ENCODE measurements at regions of chr11 and their contacts with region 1.

Region 1: DNA sequence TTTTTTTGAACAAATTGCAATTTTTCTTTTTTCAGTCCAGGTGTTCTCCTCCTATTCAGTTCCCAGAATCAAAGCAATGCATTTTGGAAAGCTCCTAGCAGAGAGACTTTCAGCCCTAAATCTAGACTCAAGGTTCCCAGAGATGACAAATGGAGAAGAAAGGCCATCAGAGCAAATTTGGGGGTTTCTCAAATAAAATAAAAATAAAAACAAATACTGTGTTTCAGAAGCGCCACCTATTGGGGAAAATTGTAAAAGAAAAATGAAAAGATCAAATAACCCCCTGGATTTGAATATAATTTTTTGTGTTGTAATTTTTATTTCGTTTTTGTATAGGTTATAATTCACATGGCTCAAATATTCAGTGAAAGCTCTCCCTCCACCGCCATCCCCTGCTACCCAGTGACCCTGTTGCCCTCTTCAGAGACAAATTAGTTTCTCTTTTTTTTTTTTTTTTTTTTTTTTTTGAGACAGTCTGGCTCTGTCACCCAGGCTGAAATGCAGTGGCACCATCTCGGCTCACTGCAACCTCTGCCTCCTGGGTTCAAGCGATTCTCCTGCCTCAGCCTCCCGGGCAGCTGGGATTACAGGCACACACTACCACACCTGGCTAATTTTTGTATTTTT is 6.2 kb upstream of the UBE4A start:
- DNase-seq: peak; percentile 64
- ATAC-seq: no peak
- H3K4me3 ChIP-seq: no peak overlapping the region
- H3K4me3 Mint-ChIP-seq: no peak overlapping the region
- H3K27ac ChIP-seq: no peak overlapping the region
- H3K27ac Mint-ChIP-seq: no peak overlapping the region
- H3K4me1 ChIP-seq: no peaks in the 10 kb centered on the region
- H3K4me1 Mint-ChIP-seq: no peaks in the 10 kb centered on the region
- H3K27me3 ChIP-seq: peaks cover 0 to 3% (median 0%) of the 10 kb centered on the region in 4 experiments
- H3K27me3 Mint-ChIP-seq: peaks cover 20% of the 10 kb centered on the region
- CTCF ChIP-seq: peak; percentile 83

Region 2: DNA sequence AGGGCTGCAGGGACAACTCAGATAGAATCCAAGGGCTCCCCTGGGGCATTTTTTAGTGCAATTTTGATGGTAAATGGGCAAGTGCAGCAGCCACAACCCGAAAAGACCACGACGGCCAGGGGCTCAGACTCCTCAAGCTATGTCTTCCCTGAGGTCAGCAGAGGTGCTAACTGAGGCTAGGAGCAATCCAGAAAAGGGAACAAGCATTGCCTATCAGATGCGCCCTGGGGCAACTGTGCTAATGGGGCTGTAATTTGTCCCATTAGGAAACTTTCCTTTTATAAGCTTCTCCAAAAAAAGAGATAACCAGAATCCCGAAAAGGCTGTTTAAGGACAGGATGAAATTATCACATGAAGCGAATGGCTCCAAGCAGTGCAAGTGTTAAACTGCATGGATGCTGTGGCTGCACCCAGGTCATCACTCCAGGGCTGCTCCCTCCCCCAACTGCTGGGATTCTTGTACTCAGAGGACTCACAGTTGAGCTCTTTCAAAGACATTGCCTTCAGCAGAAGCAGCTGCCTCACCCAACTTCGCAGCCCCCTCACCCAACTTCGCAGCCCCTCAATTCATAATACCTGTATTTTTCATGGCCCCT is 51.5 kb before region 1 on chr11:
- CTCF ChIA-PET with region 1: interaction called, 45 read pairs
- POLR2A ChIA-PET with region 1: no interaction called
- intact Hi-C with region 1: loop called (anchors 1 kb)
- DNase-seq: no peak
- ATAC-seq: no peak
- H3K4me3 ChIP-seq: no peak overlapping the region
- H3K4me3 Mint-ChIP-seq: no peak overlapping the region
- H3K27ac ChIP-seq: no peak overlapping the region
- H3K27ac Mint-ChIP-seq: no peak overlapping the region
- H3K4me1 ChIP-seq: peaks cover 4 to 5% of the 10 kb centered on the region in 2 donors
- H3K4me1 Mint-ChIP-seq: peaks cover 11% of the 10 kb centered on the region
- H3K27me3 ChIP-seq: no peaks in the 10 kb centered on the region
- H3K27me3 Mint-ChIP-seq: peaks cover 5% of the 10 kb centered on the region
- CTCF ChIP-seq: no peak

Region 3: DNA sequence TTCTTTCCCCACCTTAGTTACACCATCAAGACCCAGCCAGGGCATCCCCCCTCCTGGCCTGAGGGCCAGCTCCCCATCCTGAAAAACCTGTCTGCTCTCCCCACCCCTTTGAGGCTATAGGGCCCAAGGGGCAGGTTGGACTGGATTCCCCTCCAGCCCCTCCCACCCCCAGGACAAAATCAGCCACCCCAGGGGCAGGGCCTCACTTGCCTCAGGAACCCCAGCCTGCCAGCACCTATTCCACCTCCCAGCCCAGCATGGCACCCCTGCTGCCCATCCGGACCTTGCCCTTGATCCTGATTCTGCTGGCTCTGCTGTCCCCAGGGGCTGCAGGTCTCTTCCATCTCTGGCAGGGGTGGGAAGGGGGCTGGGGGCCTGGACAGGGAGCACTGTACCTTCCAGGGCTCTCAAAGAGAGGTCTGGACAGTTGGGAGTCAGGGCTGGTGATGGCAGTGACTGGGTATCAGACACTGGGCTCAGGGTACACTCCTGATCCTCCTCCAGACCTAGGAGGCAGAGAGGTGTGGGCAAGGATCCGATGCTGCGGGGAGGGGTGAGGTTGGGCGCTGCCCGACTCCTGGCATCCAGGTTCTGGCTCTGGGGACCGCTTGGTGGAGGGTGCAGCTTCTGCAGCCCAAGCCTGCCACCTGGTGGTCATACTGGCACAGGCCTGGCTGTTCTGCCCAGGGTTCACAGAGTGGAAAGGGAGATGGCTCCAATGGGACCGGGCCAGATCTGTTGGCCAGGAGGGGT is 603.1 kb after region 1 on chr11 and contains the start of gene UPK2:
- CTCF ChIA-PET with region 1: no interaction called
- POLR2A ChIA-PET with region 1: no interaction called
- intact Hi-C with region 1: no loop called
- DNase-seq: peak; percentile 89
- ATAC-seq: peak; percentile 99
- H3K4me3 ChIP-seq: no peak within 1 kb of the TSS
- H3K4me3 Mint-ChIP-seq: no peak within 1 kb of the TSS
- H3K27ac ChIP-seq: no peak within 1 kb of the TSS
- H3K27ac Mint-ChIP-seq: peak within 1 kb of the TSS; percentile 53
- H3K4me1 ChIP-seq: peaks cover 0 to 6% of the 10 kb centered on the region in 2 donors
- H3K4me1 Mint-ChIP-seq: peaks cover 5% of the 10 kb centered on the region
- H3K27me3 ChIP-seq: peaks cover 0 to 13% (median 0%) of the 10 kb centered on the region in 4 experiments
- H3K27me3 Mint-ChIP-seq: peaks cover 22% of the 10 kb centered on the region
- CTCF ChIP-seq: peak; percentile 94
- total RNA-seq, gene UPK2: not detected in 2 replicates